ENCODE measurements at regions of chr20 and their contacts with region 1.

Region 1: GRCh38 chr20:32443386-32443974 is 85.3 kb downstream of the ASXL1 start:
- DNase-seq: peak; percentile 4
- H3K4me3 ChIP-seq: no peak overlapping the region
- H3K27ac ChIP-seq: no peak overlapping the region
- H3K4me1 ChIP-seq: peaks cover 0 to 10% (median 4%) of the 10 kb centered on the region in 4 donors
- H3K27me3 ChIP-seq: no peaks in the 10 kb centered on the region
- CTCF ChIP-seq: no peak
- EP300 ChIP-seq: no peak
- POLR2A ChIP-seq: no peak

Region 2: GRCh38 chr20:32378461-32378860 is 65.0 kb before region 1 on chr20:
- in situ Hi-C with region 1: no loop called
- intact Hi-C with region 1: loop called (anchors 5 kb)
- DNase-seq: no peak
- H3K4me3 ChIP-seq: no peak overlapping the region
- H3K27ac ChIP-seq: no peak overlapping the region
- H3K4me1 ChIP-seq: peaks cover 0 to 11% (median 6%) of the 10 kb centered on the region in 4 donors
- H3K27me3 ChIP-seq: no peaks in the 10 kb centered on the region
- CTCF ChIP-seq: no peak
- EP300 ChIP-seq: no peak
- POLR2A ChIP-seq: no peak

Measured in transverse colon (tissue), 4 donors.